HepG2 (cell line): ENCODE measurements at regions of chr17 and their contacts with region 1.

Region 1: GRCh38 chr17:77254951-77255825 is 114.4 kb downstream of the SEC14L1 start:
- DNase-seq: peak; percentile 73
- ATAC-seq: peak; percentile 85
- H3K4me3 ChIP-seq: peak overlapping the region; percentile 19 to 68 (median 38)
- H3K27ac ChIP-seq: no peak overlapping the region
- H3K4me1 ChIP-seq: peaks cover 32% of the 10 kb centered on the region
- H3K27me3 ChIP-seq: peaks cover 6 to 74% of the 10 kb centered on the region in 2 experiments; a peak in 4 of 5 replicates
- CTCF ChIP-seq: 0 out of 2 replicates have a peak, but pooled peaks have one; percentile 8
- EP300 ChIP-seq: peak; percentile 31 to 43; a peak in 2 of 4 replicates
- POLR2A ChIP-seq: no peak
- RAD21 ChIP-seq: peak; percentile 31

Region 2: DNA sequence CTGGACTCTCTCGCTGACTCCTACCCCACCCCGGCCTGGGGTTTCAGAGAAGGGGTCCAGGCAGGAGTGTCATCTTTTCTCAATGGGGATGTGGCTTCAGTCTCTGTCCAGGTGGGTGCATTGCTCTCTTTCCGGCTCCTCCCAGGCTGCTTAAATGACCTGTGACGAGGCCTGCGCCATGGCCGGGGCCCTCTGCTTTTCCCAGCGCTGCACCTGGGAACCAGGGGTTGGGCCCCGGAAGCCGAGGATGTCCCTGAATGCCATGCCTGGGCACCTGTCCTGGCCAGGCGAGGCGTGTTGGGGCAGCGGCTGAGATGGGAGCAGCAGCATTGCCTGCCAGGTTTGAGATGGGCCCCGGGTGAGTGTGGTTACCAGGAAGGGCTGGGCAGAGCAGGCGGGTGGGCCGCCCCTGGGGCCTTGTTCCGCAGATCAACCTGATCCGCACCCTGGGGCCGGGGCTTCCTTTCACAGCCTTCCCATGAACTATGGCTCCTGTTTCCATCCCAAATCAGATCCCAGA is 33.0 kb after region 1 on chr17:
- CTCF ChIA-PET with region 1: no interaction called
- POLR2A ChIA-PET with region 1: interaction called, 23 read pairs
- in situ Hi-C with region 1: no loop called
- intact Hi-C with region 1: no loop called
- DNase-seq: no peak
- ATAC-seq: no peak
- H3K4me3 ChIP-seq: peak overlapping the region; percentile 2 to 74 (median 20); a peak in 4 of 6 replicates
- H3K27ac ChIP-seq: peak overlapping the region; percentile 98
- H3K4me1 ChIP-seq: peaks cover 84% of the 10 kb centered on the region
- H3K27me3 ChIP-seq: no peaks in the 10 kb centered on the region; a peak in 1 of 5 replicates
- CTCF ChIP-seq: no peak
- EP300 ChIP-seq: no peak
- POLR2A ChIP-seq: no peak
- RAD21 ChIP-seq: no peak